ENCODE measurements at regions of chr1 and their contacts with region 1.

Region 1: DNA sequence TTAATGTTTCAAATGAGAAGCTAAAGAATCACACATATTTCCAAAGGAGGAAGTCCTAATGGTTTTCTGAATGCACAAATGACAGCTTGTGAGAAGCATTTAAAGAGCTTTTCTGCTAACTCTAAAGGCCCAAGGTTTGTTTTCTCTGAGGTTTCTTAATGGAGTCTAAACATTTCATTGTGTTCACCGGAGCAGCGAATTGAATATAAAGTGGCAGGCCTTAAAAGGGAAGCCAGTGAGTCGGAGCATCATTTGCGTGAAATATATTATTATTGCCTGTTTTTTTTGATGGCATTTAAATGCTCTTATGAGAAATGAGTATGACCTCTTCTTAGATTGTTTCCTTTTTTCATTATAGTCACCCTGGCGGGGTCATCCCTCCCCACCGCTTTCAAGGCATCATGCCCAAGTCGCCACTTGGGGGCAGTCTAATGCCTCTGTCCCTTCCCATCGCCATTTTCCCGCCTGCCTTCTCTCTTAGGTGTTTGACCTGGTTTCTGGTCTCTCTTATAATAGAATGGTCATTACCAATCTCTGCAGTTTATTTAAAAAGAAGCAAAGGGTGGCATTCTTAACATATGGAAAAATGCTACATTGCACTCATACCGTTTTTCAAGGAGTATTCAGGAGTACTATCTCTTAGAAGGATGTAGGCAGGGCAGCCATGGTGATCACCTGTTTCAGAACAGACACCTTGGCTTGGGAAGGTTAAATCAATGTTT is 25.3 kb upstream of the OVAAL start:
- DNase-seq: peak; percentile 64
- ATAC-seq: peak; percentile 75
- H3K4me3 ChIP-seq: no peak overlapping the region
- H3K27ac ChIP-seq: no peak overlapping the region
- H3K4me1 ChIP-seq: no peaks in the 10 kb centered on the region
- H3K27me3 ChIP-seq: 0 out of 2 replicates have a peak, but pooled peaks cover 2% of the 10 kb centered on the region
- CTCF ChIP-seq: peak; percentile 91
- POLR2A ChIP-seq: no peak
- RAD21 ChIP-seq: peak; percentile 96

Region 2: DNA sequence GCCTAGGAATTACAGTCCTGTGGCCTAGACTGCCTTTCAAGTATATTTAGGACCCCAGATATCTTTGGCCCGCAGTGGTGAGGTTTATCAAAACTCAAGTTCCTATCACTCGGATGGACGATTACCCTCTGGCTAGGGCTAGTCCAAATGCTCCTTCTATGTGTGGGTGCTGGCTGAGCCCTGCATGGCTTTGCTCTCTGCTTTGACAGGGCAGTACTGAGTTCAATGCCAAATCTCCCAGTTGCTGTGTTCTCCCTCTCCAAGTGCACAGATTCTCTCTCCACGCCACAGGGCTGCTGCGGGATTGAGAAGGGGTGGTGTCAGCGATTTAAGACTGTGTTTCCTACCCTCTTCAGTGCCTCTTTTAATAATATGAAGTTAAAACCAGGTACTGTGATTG is 206.3 kb before region 1 on chr1:
- CTCF ChIA-PET with region 1: no interaction called
- POLR2A ChIA-PET with region 1: no interaction called
- dilution Hi-C with region 1: no loop called
- in situ Hi-C with region 1: no loop called
- intact Hi-C with region 1: no loop called
- DNase-seq: no peak
- ATAC-seq: no peak
- H3K4me3 ChIP-seq: no peak overlapping the region
- H3K27ac ChIP-seq: no peak overlapping the region
- H3K4me1 ChIP-seq: no peaks in the 10 kb centered on the region
- H3K27me3 ChIP-seq: no peaks in the 10 kb centered on the region
- CTCF ChIP-seq: no peak
- POLR2A ChIP-seq: no peak
- RAD21 ChIP-seq: no peak

Region 3: GRCh38 chr1:180544050-180544449 is 10.6 kb after region 1 on chr1:
- CTCF ChIA-PET with region 1: no interaction called
- POLR2A ChIA-PET with region 1: no interaction called
- dilution Hi-C with region 1: no loop called
- in situ Hi-C with region 1: no loop called
- intact Hi-C with region 1: no loop called
- DNase-seq: no peak
- ATAC-seq: no peak
- H3K4me3 ChIP-seq: no peak overlapping the region
- H3K27ac ChIP-seq: no peak overlapping the region
- H3K4me1 ChIP-seq: peaks cover 8% of the 10 kb centered on the region
- H3K27me3 ChIP-seq: no peaks in the 10 kb centered on the region
- CTCF ChIP-seq: no peak
- POLR2A ChIP-seq: no peak
- RAD21 ChIP-seq: no peak

Region 4: DNA sequence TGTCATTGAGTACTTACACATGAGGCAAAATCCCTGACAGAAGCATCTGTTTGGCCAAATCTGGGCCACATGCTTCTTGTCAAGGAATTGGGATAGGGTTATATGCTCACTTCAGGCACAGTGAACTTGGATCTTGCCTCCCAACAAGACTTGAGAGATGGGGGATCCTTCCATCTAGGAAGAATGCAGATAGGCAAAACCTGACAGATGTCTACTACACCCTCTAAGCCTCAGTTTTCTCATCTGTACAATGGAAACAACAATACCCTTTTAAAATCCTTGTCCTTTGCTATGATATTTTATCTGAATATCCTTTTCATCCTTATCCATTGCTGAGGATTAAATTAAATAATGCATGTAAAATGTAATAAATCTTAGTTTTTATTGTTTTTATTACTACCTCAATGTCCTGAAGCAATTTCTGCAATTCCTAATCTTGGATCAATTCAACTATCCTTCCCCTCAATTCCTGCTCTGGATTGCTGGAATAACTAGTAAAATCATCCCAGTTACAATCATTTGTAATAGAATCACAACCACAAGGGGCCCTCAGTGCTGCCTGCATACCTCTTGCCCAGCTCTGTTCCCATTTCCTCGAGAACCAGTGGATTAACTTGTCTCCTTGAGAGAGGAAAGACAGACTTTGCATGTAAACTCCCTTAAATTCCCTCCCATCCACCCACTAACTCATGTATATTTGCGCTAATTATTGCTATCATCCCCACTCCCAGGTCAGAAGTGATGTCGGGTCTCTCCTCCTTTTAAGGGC is 90.3 kb after region 1 on chr1:
- CTCF ChIA-PET with region 1: no interaction called
- POLR2A ChIA-PET with region 1: no interaction called
- dilution Hi-C with region 1: no loop called
- in situ Hi-C with region 1: loop called (anchors 5 kb)
- intact Hi-C with region 1: no loop called
- DNase-seq: peak; percentile 58
- ATAC-seq: peak; percentile 69; the same call in 1 of the 2 replicates
- H3K4me3 ChIP-seq: no peak overlapping the region
- H3K27ac ChIP-seq: no peak overlapping the region
- H3K4me1 ChIP-seq: peaks cover 2% of the 10 kb centered on the region; the same call in 1 of the 2 replicates
- H3K27me3 ChIP-seq: no peaks in the 10 kb centered on the region
- CTCF ChIP-seq: peak; percentile 51
- POLR2A ChIP-seq: no peak
- RAD21 ChIP-seq: peak; percentile 53

Region 5: DNA sequence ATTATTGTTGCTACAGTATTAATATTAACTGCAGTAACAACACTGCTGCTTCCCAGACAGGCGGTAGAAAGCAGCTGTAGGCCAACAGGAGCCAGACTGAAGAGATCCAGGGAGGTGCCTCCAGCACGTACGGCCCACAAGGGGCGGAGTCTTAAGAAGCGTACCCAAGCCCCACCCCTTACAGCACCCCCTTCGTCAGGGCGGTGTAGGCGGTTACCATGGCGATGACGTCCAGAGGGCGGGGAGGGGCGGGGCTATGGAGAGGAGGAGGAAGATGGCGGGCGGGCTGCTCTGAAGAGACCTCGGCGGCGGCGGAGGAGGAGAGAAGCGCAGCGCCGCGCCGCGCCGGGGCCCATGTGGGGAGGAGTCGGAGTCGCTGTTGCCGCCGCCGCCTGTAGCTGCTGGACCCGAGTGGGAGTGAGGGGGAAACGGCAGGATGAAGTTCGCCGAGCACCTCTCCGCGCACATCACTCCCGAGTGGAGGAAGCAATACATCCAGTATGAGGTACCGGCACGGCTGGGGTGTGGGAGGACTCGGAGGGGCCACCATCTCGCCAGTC is 98.4 kb after region 1 on chr1 and contains the start of gene XPR1:
- CTCF ChIA-PET with region 1: interaction called, 6 read pairs
- POLR2A ChIA-PET with region 1: no interaction called
- dilution Hi-C with region 1: no loop called
- in situ Hi-C with region 1: loop called (anchors 5 kb)
- intact Hi-C with region 1: loop called (anchors 2 kb)
- DNase-seq: peak; percentile 99
- ATAC-seq: peak; percentile 99
- H3K4me3 ChIP-seq: peak within 1 kb of the TSS; percentile 94
- H3K27ac ChIP-seq: peak within 1 kb of the TSS; percentile 89
- H3K4me1 ChIP-seq: no peaks in the 10 kb centered on the region
- H3K27me3 ChIP-seq: no peaks in the 10 kb centered on the region
- CTCF ChIP-seq: peak; percentile 37
- POLR2A ChIP-seq: peak; percentile 74
- RAD21 ChIP-seq: peak; percentile 47
- total RNA-seq, gene XPR1: 25.1 and 25.3 TPM in 2 replicates

Region 6: DNA sequence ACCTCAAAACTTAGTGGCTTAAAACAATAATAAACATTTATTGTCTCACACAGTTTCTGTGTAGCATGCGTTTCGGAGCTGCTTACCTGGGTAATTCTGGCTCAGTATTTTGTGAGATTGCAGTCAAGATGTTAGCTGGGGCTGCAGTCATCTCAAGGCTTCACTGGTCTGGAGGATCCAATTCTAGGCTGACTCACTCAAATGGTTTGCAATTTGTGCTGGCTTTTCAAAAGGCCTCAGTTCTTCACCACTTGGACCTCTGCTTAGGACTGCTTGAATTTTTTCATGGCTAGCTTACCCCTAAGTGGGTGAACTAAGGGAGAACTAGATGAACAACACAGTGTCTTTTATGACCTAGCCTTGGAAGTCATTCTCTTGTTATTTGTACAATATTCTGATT is 119.4 kb after region 1 on chr1:
- CTCF ChIA-PET with region 1: interaction called, 10 read pairs
- POLR2A ChIA-PET with region 1: no interaction called
- dilution Hi-C with region 1: no loop called
- in situ Hi-C with region 1: no loop called
- intact Hi-C with region 1: no loop called
- DNase-seq: peak; percentile 59
- ATAC-seq: peak; percentile 72
- H3K4me3 ChIP-seq: no peak overlapping the region
- H3K27ac ChIP-seq: no peak overlapping the region
- H3K4me1 ChIP-seq: no peaks in the 10 kb centered on the region
- H3K27me3 ChIP-seq: no peaks in the 10 kb centered on the region
- CTCF ChIP-seq: no peak
- POLR2A ChIP-seq: no peak
- RAD21 ChIP-seq: no peak

Region 7: DNA sequence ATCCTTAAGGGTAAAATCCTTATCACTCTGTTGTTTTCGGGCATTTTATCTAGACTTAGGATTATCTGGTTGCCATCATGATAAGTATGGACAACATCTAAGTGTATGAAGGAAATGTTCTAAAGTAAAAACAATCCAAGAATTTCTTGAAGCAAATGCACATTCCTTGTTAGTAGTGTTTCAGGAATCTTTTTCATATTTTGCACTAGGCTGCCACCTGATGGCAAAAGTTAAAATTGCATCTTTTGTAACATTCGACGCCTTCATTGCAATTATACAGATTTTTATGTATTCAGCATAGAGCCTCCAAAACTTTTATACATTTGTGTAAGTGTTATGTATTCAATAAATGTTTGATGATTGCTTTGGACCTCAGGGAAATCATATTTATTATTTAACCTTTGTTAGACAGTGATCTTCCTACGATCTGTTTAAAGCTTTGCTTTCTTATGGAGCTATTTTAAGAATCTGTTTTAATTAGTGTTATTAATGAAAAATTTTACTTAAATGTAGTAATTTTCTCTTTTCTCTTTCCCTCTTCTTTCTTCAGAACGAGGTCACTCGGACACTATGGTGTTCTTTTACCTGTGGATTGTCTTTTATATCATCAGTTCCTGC is 329.8 kb after region 1 on chr1:
- CTCF ChIA-PET with region 1: interaction called, 7 read pairs
- POLR2A ChIA-PET with region 1: no interaction called
- dilution Hi-C with region 1: no loop called
- in situ Hi-C with region 1: loop called (anchors 5 kb)
- intact Hi-C with region 1: loop called (anchors 5 kb)
- DNase-seq: peak; percentile 68
- ATAC-seq: peak; percentile 95
- H3K4me3 ChIP-seq: no peak overlapping the region
- H3K27ac ChIP-seq: peak overlapping the region; percentile 29; the same call in 1 of the 2 replicates
- H3K4me1 ChIP-seq: no peaks in the 10 kb centered on the region
- H3K27me3 ChIP-seq: no peaks in the 10 kb centered on the region
- CTCF ChIP-seq: peak; percentile 80
- POLR2A ChIP-seq: no peak
- RAD21 ChIP-seq: peak; percentile 86